ENCODE measurements at regions of chr17 and their contacts with region 1.

Region 1: DNA sequence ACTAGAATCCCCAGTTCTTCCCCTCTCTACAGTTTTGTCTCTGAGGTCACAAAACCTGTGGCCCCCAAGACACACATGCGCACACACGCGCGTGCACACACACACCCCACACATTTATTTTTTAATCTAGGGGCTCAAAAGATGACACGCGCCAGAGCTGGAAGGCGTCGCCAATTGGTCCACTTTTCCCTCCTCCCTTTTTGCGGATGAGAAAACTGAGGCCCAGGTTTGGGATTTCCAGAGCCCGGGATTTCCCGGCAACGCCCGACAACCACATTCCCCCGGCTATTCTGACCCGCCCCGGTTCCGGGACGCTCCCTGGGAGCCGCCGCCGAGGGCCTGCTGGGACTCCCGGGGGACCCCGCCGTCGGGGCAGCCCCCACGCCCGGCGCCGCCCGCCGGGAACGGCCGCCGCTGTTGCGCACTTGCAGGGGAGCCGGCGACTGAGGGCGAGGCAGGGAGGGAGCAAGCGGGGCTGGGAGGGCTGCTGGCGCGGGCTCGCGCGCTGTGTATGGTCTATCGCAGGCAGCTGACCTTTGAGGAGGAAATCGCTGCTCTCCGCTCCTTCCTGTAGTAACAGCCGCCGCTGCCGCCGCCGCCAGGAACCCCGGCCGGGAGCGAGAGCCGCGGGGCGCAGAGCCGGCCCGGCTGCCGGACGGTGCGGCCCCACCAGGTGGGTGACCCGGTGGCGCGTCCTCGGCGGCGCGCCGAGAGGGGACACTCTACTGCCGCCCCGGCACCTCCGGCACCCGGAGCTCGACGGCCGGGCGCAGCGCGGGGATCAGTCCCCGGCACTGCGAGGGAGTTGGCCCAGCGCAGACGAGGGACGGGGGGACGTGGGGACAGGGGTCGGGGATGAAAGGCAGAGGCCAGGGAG is at the start of gene STAT5A:
- DNase-seq: peak; percentile 90
- ATAC-seq: peak; percentile 65
- H3K4me3 Mint-ChIP-seq: peak within 1 kb of the TSS; percentile 81
- H3K27ac Mint-ChIP-seq: peak within 1 kb of the TSS; percentile 96
- H3K4me1 Mint-ChIP-seq: peaks cover 63% of the 10 kb centered on the region
- H3K27me3 Mint-ChIP-seq: no peaks in the 10 kb centered on the region
- total RNA-seq, gene STAT5A: 178 to 203 TPM

Region 2: DNA sequence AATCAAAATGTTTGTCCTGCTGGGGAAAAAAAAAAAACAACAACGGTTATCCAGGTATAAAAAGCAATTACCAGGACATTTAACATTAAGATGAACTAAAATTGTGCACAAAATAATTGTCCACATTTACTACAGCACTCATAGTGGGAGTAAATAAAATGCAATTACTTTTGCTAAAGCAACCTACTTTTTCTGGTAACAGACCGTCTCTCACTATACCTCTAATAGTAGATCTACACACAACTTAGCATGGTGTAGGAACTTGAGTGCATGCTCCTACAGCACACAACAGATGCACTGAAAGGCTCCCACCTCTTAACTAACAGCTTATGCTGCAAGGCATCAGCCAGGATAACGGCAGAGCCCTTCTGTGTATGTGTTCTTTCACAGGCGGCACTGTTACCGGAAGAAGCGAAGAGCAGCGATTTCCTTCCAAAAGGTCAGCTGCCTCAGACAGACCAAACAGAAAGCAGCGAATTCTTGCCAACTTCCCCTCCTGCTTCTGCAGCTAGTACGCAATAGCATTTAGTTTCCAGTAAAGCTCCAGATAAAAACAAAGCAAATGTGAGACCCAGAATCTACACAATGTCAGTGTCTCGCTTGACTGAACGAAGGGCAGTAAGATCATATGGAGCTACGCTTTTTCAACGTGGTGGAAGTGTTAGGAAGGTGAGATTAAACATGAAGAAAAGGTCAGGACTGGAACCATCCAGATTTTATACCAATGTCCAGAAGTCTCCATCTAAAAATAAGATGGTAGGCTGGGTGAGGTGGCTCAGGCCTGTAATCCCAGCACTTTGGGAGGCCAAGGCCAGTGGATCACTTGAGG is 39.6 kb before region 1 on chr17:
- CTCF ChIA-PET with region 1: interaction called, 6 read pairs
- POLR2A ChIA-PET with region 1: interaction called, 44 read pairs
- intact Hi-C with region 1: loop called (anchors 1 kb)
- DNase-seq: peak; percentile 87
- ATAC-seq: peak; percentile 81
- H3K4me3 Mint-ChIP-seq: peak overlapping the region; percentile 79
- H3K27ac Mint-ChIP-seq: peak overlapping the region; percentile 100
- H3K4me1 Mint-ChIP-seq: peaks cover 71% of the 10 kb centered on the region
- H3K27me3 Mint-ChIP-seq: no peaks in the 10 kb centered on the region

Region 3: DNA sequence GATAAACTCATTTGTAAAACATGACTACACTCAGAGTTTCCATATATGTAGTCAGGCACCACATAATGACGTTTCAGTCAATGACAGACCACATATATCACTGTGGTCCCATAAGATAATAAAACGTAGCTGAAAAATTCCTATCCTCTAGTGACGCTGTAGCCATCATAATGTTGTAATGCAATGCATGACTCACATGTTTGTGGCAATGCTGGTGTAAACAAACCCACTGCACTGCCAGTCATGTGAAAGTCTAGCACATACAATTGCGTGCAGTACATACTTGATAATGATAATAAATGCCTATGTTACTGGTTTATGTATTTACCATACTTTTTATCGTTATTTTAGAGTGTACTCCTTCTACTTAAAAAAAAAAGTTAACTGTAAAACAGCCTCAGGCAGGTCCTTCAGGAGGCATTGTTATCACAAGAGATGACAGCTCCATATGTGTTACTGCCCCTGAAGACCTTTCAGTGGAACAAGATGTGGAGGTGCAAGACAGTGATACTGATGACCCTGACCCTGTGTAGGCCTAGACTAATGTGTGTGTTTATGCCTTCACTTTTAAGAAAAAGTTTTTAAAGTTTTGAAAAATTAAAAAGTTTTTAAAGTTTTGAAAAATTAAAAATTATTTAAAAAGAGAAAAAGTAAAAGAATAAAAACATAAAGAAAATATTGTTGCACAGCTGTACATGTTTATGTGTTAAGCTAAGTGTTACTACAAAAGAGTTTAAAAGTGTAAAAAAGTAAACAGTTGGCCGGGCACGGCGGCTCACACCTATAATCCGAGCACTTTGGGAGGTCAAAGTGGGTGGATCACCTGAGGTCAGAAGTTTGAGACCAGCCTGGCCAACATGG is 21.0 kb before region 1 on chr17:
- CTCF ChIA-PET with region 1: no interaction called
- POLR2A ChIA-PET with region 1: interaction called, 9 read pairs
- intact Hi-C with region 1: loop called in 1 of 2 experiments (anchors 1 kb)
- DNase-seq: peak; percentile 70
- ATAC-seq: peak; percentile 77
- H3K4me3 Mint-ChIP-seq: peak overlapping the region; percentile 47
- H3K27ac Mint-ChIP-seq: peak overlapping the region; percentile 98
- H3K4me1 Mint-ChIP-seq: peaks cover 61% of the 10 kb centered on the region
- H3K27me3 Mint-ChIP-seq: no peaks in the 10 kb centered on the region

Region 4: DNA sequence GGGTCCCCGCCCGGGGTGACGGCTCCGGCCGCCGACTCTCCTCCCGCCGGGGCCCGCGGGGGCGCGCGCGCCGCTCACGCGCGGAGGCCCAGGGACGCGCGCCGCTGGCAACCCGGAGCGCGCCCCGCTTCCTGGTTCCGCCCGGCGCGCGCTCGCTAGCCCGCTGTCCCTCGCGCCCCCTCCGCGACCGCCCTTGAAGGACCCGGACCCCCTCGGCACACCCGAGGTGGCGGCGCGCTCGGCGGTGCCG is 11.9 kb before region 1 on chr17 and contains the start of gene STAT5B:
- CTCF ChIA-PET with region 1: interaction called, 5 read pairs
- POLR2A ChIA-PET with region 1: interaction called, 17 read pairs
- intact Hi-C with region 1: loop called (anchors 1 kb)
- DNase-seq: peak; percentile 80
- ATAC-seq: peak; percentile 51
- H3K4me3 Mint-ChIP-seq: peak within 1 kb of the TSS; percentile 94
- H3K27ac Mint-ChIP-seq: peak within 1 kb of the TSS; percentile 97
- H3K4me1 Mint-ChIP-seq: peaks cover 37% of the 10 kb centered on the region
- H3K27me3 Mint-ChIP-seq: no peaks in the 10 kb centered on the region
- total RNA-seq, gene STAT5B: 162 to 203 TPM

Region 5: GRCh38 chr17:42312285-42313130 is 24.3 kb after region 1 on chr17:
- CTCF ChIA-PET with region 1: interaction called, 4 read pairs
- POLR2A ChIA-PET with region 1: interaction called, 4 read pairs
- intact Hi-C with region 1: loop called in 1 of 2 experiments (anchors 2 kb)
- DNase-seq: peak; percentile 94
- ATAC-seq: peak; percentile 69
- H3K4me3 Mint-ChIP-seq: peak overlapping the region; percentile 66
- H3K27ac Mint-ChIP-seq: peak overlapping the region; percentile 96
- H3K4me1 Mint-ChIP-seq: peaks cover 90% of the 10 kb centered on the region
- H3K27me3 Mint-ChIP-seq: no peaks in the 10 kb centered on the region